H1 (cell line): ENCODE measurements at regions of chr17 and their contacts with region 1.

Region 1: DNA sequence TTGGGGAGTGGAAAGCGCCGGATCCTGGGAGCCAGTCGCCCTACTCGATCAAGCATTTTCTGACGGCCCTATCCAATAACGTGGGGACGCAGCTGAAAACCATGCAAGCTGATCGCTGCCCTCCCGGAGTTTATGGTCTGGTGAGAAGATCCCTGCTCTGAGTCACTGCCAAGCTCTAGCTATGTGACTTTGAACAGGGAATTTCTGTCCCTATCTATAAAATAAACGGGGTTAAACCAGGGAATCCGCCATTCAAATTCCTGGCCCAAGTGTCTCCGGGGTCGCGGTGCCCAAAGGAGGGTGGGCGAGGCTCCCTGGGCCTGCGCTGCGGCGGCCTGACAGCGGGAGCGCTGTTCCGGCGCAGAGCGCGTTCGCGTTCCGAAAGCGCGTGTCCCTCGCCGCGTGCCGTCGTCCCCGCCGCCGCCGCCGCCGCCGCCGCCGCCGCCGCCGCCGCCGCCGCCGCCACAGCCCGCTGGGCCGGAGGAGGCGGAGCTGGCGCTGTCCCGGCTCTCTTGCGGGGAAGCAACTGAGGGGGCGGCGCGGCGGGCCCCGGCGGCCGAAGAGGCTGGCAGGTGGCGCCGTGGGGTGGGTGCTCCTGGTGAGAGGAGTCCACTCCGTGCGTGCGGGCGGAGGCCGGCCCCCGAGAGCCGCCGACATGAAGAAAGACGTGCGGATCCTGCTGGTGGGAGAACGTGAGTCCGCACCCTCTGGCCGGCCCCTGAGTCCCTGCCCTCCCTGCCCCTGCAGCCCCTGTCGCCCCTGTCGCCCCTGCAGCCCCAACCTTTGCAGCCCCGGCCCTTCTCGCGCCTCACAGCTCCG is at the start of gene RHOT1:
- DNase-seq: peak in 1 of 2 experiments; percentile 88
- H3K4me3 ChIP-seq: peak within 1 kb of the TSS; percentile 76 to 89 (median 86)
- H3K27ac ChIP-seq: no peak within 1 kb of the TSS
- H3K4me1 ChIP-seq: no peaks in the 10 kb centered on the region
- H3K27me3 ChIP-seq: no peaks in the 10 kb centered on the region
- CTCF ChIP-seq: peak; percentile 48 to 80 (median 58)
- EP300 ChIP-seq: peak in 1 of 2 experiments; percentile 83; a peak in 1 of 3 replicates
- POLR2A ChIP-seq: peak in 1 of 2 experiments; percentile 61; a peak in 2 of 3 replicates
- RAD21 ChIP-seq: no peak
- total RNA-seq, gene RHOT1: 30.6 and 34.2 TPM in 2 replicates

Region 2: DNA sequence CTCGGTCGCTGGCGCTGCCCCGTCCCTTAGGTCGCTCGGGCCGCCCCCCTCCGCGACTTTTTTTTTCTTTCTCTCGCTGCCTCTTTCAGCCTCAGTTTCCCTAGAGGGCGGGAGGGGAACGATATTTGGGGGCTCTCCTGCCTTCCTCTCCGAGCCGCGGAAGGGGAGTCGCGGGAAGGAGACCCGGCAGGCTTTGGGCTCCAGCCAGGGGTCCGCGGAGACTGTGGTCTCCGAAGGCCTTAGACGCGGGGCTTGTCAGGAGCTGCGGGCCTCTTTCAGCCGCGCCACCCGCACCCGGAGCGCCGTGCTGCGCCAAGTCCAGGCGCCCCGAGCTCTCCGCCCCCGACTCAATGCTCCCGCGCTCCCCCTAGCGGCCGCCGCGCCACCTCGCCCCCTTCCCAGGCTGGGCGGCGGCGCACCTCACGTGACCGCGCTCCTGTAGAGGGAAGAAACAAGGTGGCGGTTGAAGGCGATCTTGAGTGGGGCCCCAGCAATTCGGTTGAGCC is 135.2 kb before region 1 on chr17 and contains the start of gene LRRC37B:
- CTCF ChIA-PET with region 1: interaction called, 25 read pairs
- POLR2A ChIA-PET with region 1: interaction called, 5 read pairs
- DNase-seq: peak; percentile 25 to 98
- H3K4me3 ChIP-seq: peak within 1 kb of the TSS; percentile 77 to 95 (median 88)
- H3K27ac ChIP-seq: peak within 1 kb of the TSS; percentile 35
- H3K4me1 ChIP-seq: no peaks in the 10 kb centered on the region
- H3K27me3 ChIP-seq: peaks cover 0 to 4% (median 1%) of the 10 kb centered on the region in 4 experiments; a peak in 3 of 7 replicates
- CTCF ChIP-seq: peak; percentile 84 to 87 (median 87)
- EP300 ChIP-seq: no peak
- POLR2A ChIP-seq: peak in 1 of 2 experiments; percentile 36; a peak in 1 of 3 replicates
- RAD21 ChIP-seq: peak; percentile 41 to 53; a peak in 2 of 4 replicates
- total RNA-seq, gene LRRC37B: 18.8 and 19.0 TPM in 2 replicates

Region 3: DNA sequence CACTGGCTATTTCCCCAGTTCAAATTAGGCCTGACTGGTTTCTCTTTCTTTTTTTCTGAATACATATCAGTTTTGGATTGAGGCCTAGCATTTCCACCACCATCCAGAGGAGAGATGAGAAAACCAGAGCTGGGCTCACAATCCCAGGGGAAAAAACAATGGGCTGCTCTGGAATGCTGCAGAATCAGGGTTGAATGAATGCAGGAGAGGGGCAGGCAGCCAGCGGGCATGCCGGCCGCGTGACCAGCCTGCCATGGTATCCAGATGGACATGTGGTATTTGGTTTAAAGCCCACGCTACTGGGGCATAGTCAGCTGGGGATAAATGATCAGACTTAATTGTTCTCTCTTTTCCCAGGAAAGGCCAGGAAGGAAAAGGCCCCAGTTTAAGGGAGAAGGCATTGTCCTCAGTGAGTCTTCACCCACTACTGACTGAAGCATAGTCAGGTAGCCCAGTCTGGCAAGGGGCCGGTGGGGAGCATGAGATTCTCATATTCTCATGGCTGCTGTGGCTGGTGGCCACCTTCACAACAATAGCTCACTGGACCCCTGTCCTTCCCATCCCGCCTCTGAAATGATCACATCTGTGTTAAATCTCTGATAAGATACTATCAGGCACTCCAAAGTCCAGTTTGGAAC is 38.7 kb before region 1 on chr17:
- CTCF ChIA-PET with region 1: interaction called, 16 read pairs
- POLR2A ChIA-PET with region 1: no interaction called
- DNase-seq: peak in 1 of 2 experiments; percentile 42
- H3K4me3 ChIP-seq: no peak overlapping the region
- H3K27ac ChIP-seq: no peak overlapping the region
- H3K4me1 ChIP-seq: peaks cover 0 to 7% (median 4%) of the 10 kb centered on the region in 4 experiments; a peak in 5 of 7 replicates
- H3K27me3 ChIP-seq: no peaks in the 10 kb centered on the region
- CTCF ChIP-seq: no peak
- EP300 ChIP-seq: no peak
- POLR2A ChIP-seq: no peak
- RAD21 ChIP-seq: no peak

Region 4: DNA sequence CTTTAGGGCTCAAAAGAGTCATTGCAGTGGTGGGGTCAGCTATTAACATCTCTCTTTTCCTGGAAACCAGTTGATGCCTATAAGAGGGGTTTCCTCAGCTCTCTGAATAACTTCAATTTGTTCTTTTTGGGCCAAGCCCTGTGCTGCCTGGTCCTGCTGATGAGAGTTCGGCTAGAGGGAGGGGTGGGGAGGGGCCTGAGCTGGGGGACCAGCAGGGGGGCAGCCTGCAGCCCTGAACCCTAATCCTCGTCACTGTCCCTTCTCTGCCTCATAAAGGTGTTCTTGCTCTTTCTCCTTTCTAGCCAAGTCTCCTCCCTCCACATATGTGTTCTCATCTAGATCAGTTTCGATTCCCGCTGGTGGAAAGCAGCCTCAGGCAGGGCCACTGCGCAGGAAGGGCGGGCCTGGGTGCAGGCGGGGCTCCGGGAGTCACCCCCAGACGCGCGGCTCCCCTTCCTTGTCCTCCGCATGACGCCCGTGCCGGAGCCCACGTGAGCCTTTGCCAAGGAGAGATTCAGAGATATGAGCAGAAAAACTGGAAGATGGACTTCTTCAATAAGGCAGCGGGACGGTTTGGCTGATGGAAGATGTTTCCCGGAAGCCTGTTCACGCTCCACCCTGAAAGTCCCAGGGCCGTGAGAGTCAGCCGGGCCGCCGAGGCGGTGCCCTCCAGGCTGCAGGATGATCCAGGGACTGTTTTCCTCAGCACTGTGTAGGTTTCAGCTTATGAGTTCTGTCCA is 14.9 kb before region 1 on chr17:
- CTCF ChIA-PET with region 1: interaction called, 14 read pairs
- POLR2A ChIA-PET with region 1: interaction called, 4 read pairs
- DNase-seq: peak in 1 of 2 experiments; percentile 76
- H3K4me3 ChIP-seq: peak overlapping the region; percentile 61 to 88 (median 74)
- H3K27ac ChIP-seq: peak overlapping the region; percentile 25; the same call in 1 of the 2 replicates
- H3K4me1 ChIP-seq: peaks cover 0 to 5% (median under 1%) of the 10 kb centered on the region in 4 experiments; a peak in 3 of 7 replicates
- H3K27me3 ChIP-seq: no peaks in the 10 kb centered on the region
- CTCF ChIP-seq: no peak
- EP300 ChIP-seq: no peak
- POLR2A ChIP-seq: peak in 1 of 2 experiments; percentile 40; a peak in 1 of 3 replicates
- RAD21 ChIP-seq: no peak

Region 5: GRCh38 chr17:32174889-32175288 is 32.6 kb after region 1 on chr17:
- CTCF ChIA-PET with region 1: no interaction called
- POLR2A ChIA-PET with region 1: no interaction called
- DNase-seq: no peak
- H3K4me3 ChIP-seq: no peak overlapping the region
- H3K27ac ChIP-seq: no peak overlapping the region
- H3K4me1 ChIP-seq: no peaks in the 10 kb centered on the region
- H3K27me3 ChIP-seq: no peaks in the 10 kb centered on the region
- CTCF ChIP-seq: no peak
- EP300 ChIP-seq: no peak
- POLR2A ChIP-seq: no peak
- RAD21 ChIP-seq: no peak

Region 6: GRCh38 chr17:32215696-32216095 is 73.4 kb after region 1 on chr17:
- CTCF ChIA-PET with region 1: no interaction called
- POLR2A ChIA-PET with region 1: no interaction called
- DNase-seq: no peak
- H3K4me3 ChIP-seq: no peak overlapping the region
- H3K27ac ChIP-seq: no peak overlapping the region
- H3K4me1 ChIP-seq: no peaks in the 10 kb centered on the region
- H3K27me3 ChIP-seq: no peaks in the 10 kb centered on the region
- CTCF ChIP-seq: no peak
- EP300 ChIP-seq: no peak
- POLR2A ChIP-seq: no peak
- RAD21 ChIP-seq: no peak